B cell (primary cell): ENCODE measurements at regions of chr6 and their contacts with region 1.

Region 1: GRCh38 chr6:26156076-26156849 is 69.0 kb downstream of the HFE start:
- DNase-seq: peak; percentile 95
- ATAC-seq: peak; percentile 58
- H3K4me3 ChIP-seq: peak overlapping the region; percentile 75 to 95 (median 93)
- H3K4me3 Mint-ChIP-seq: peak overlapping the region; percentile 89
- H3K27ac ChIP-seq: peak overlapping the region; percentile 87 to 88
- H3K27ac Mint-ChIP-seq: peak overlapping the region; percentile 96
- H3K4me1 ChIP-seq: peaks cover 23 to 32% of the 10 kb centered on the region in 2 donors
- H3K4me1 Mint-ChIP-seq: peaks cover 34% of the 10 kb centered on the region
- H3K27me3 ChIP-seq: no peaks in the 10 kb centered on the region
- H3K27me3 Mint-ChIP-seq: no peaks in the 10 kb centered on the region
- CTCF ChIP-seq: no peak

Region 2: GRCh38 chr6:26025894-26026832 is 130.1 kb before region 1 on chr6:
- CTCF ChIA-PET with region 1: interaction called, 4 read pairs
- POLR2A ChIA-PET with region 1: interaction called, 43 read pairs
- intact Hi-C with region 1: loop called (anchors 2 kb)
- DNase-seq: peak; percentile 97
- ATAC-seq: peak; percentile 35
- H3K4me3 ChIP-seq: peak overlapping the region; percentile 58 to 99 (median 88)
- H3K4me3 Mint-ChIP-seq: peak overlapping the region; percentile 98
- H3K27ac ChIP-seq: peak overlapping the region; percentile 88 to 97
- H3K27ac Mint-ChIP-seq: peak overlapping the region; percentile 98
- H3K4me1 ChIP-seq: peaks cover 23 to 32% of the 10 kb centered on the region in 2 donors
- H3K4me1 Mint-ChIP-seq: peaks cover 49% of the 10 kb centered on the region
- H3K27me3 ChIP-seq: no peaks in the 10 kb centered on the region
- H3K27me3 Mint-ChIP-seq: no peaks in the 10 kb centered on the region
- CTCF ChIP-seq: peak; percentile 92

Region 3: GRCh38 chr6:26103770-26104456 is 52.4 kb before region 1 on chr6:
- CTCF ChIA-PET with region 1: interaction called, 4 read pairs
- POLR2A ChIA-PET with region 1: interaction called, 46 read pairs
- intact Hi-C with region 1: loop called (anchors 1 kb)
- DNase-seq: peak; percentile 98
- ATAC-seq: peak; percentile 87
- H3K4me3 ChIP-seq: peak overlapping the region; percentile 52 to 81 (median 62)
- H3K4me3 Mint-ChIP-seq: peak overlapping the region; percentile 88
- H3K27ac ChIP-seq: peak overlapping the region; percentile 78 to 79
- H3K27ac Mint-ChIP-seq: peak overlapping the region; percentile 99
- H3K4me1 ChIP-seq: peaks cover 5 to 15% of the 10 kb centered on the region in 2 donors
- H3K4me1 Mint-ChIP-seq: peaks cover 15% of the 10 kb centered on the region
- H3K27me3 ChIP-seq: no peaks in the 10 kb centered on the region
- H3K27me3 Mint-ChIP-seq: no peaks in the 10 kb centered on the region
- CTCF ChIP-seq: peak; percentile 66

Region 4: GRCh38 chr6:26196846-26197648 is 40.8 kb after region 1 on chr6:
- CTCF ChIA-PET with region 1: interaction called, 42 read pairs
- POLR2A ChIA-PET with region 1: interaction called, 305 read pairs
- intact Hi-C with region 1: loop called (anchors 1 kb)
- DNase-seq: peak; percentile 95
- ATAC-seq: peak; percentile 55
- H3K4me3 ChIP-seq: peak overlapping the region; percentile 78 to 100 (median 90)
- H3K4me3 Mint-ChIP-seq: peak overlapping the region; percentile 91
- H3K27ac ChIP-seq: peak overlapping the region; percentile 78 to 95
- H3K27ac Mint-ChIP-seq: peak overlapping the region; percentile 96
- H3K4me1 ChIP-seq: peaks cover 16 to 31% of the 10 kb centered on the region in 2 donors
- H3K4me1 Mint-ChIP-seq: peaks cover 41% of the 10 kb centered on the region
- H3K27me3 ChIP-seq: no peaks in the 10 kb centered on the region
- H3K27me3 Mint-ChIP-seq: no peaks in the 10 kb centered on the region
- CTCF ChIP-seq: no peak

Region 5: DNA sequence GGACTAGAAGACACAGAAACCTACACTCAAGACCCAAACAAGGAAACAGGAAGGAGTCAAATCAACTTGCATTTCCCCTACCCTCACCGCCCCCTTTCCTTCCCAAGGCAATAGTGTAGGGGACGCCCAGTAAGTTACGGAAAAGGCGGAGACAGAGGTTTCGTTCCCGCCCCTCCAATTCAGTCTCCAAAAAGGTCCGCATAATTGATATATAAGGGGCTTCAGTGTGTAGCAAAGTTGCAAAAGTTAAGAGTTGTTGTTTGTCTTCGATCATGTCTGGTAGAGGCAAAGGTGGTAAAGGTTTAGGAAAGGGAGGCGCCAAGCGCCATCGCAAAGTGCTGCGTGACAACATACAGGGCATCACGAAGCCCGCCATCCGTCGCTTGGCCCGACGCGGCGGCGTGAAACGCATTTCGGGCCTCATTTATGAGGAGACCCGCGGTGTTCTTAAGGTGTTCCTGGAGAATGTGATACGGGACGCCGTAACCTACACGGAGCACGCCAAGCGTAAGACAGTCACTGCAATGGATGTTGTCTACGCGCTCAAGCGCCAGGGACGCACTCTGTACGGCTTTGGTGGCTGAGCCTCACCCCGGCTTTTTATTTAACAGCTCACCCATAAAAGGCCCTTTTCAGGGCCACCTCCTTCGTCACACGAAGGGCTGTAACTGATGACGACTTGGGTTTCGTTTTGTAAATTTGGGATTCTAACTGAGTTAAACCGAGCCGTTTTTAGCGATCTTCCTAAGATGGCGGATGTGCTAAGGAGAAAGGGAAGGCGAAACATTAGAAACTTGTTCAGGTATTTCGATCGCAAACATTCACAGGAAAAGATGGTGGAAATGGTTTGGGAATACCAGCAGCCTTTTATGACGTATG is 84.1 kb after region 1 on chr6:
- CTCF ChIA-PET with region 1: no interaction called
- POLR2A ChIA-PET with region 1: interaction called, 63 read pairs
- intact Hi-C with region 1: no loop called
- DNase-seq: peak; percentile 91
- ATAC-seq: peak; percentile 80
- H3K4me3 ChIP-seq: peak overlapping the region; percentile 55 to 87 (median 67)
- H3K4me3 Mint-ChIP-seq: peak overlapping the region; percentile 87
- H3K27ac ChIP-seq: peak overlapping the region; percentile 76 to 93
- H3K27ac Mint-ChIP-seq: peak overlapping the region; percentile 94
- H3K4me1 ChIP-seq: peaks cover 6 to 16% of the 10 kb centered on the region in 2 donors
- H3K4me1 Mint-ChIP-seq: peaks cover 20% of the 10 kb centered on the region
- H3K27me3 ChIP-seq: no peaks in the 10 kb centered on the region
- H3K27me3 Mint-ChIP-seq: no peaks in the 10 kb centered on the region
- CTCF ChIP-seq: no peak

Region 6: DNA sequence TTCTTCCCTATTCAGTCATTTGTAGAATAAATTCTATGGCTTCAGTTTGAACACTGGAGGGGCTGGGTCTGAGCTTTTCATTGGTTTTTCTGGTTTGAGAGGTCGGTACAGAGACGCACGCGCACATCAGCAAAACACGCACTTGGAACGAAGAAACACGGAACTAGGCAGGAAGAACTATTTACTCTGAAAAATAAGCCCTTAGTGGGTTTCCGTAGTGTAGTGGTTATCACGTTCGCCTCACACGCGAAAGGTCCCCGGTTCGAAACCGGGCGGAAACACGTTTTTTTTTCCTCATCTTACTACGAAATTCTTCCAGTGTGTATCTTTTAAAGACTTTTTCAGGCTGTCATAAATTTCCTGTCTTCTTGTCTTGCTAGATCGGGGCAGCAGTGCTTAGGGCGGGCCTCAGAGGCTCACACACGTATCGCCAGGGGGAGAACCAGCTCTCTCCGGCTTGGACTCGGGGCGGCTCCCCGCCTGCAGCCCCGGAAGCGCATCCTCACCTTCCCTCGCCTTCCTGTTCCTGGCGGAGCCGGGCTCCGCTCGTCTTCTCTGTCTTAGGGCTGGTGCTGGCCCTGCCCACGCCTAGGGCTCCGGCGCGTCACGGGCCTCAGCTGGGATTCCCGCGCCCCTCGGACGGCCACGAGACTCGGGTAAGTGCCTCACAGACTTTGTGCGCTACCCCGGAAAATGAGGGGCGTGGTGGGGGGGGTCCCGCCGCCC is 381.7 kb after region 1 on chr6 and contains the start of gene HMGN4:
- CTCF ChIA-PET with region 1: no interaction called
- POLR2A ChIA-PET with region 1: interaction called, 12 read pairs
- intact Hi-C with region 1: no loop called
- DNase-seq: peak; percentile 97
- ATAC-seq: peak; percentile 68
- H3K4me3 ChIP-seq: peak within 1 kb of the TSS; percentile 89 to 98 (median 92)
- H3K4me3 Mint-ChIP-seq: peak within 1 kb of the TSS; percentile 96
- H3K27ac ChIP-seq: peak within 1 kb of the TSS; percentile 84 to 94
- H3K27ac Mint-ChIP-seq: peak within 1 kb of the TSS; percentile 99
- H3K4me1 ChIP-seq: peaks cover 29 to 35% of the 10 kb centered on the region in 2 donors
- H3K4me1 Mint-ChIP-seq: peaks cover 56% of the 10 kb centered on the region
- H3K27me3 ChIP-seq: no peaks in the 10 kb centered on the region
- H3K27me3 Mint-ChIP-seq: peaks cover 3% of the 10 kb centered on the region
- CTCF ChIP-seq: peak; percentile 8
- total RNA-seq, gene HMGN4: 81.1 and 82.4 TPM in 2 replicates

Region 7: GRCh38 chr6:27838058-27838944 is 1682.0 kb after region 1 on chr6:
- CTCF ChIA-PET with region 1: no interaction called
- POLR2A ChIA-PET with region 1: interaction called, 17 read pairs
- intact Hi-C with region 1: loop called (anchors 5 kb)
- DNase-seq: peak; percentile 98
- ATAC-seq: peak; percentile 80
- H3K4me3 ChIP-seq: peak overlapping the region; percentile 82 to 99 (median 90)
- H3K4me3 Mint-ChIP-seq: no peak overlapping the region
- H3K27ac ChIP-seq: peak overlapping the region; percentile 94 to 96
- H3K27ac Mint-ChIP-seq: no peak overlapping the region
- H3K4me1 ChIP-seq: peaks cover 28 to 29% of the 10 kb centered on the region in 2 donors
- H3K4me1 Mint-ChIP-seq: peaks cover 18% of the 10 kb centered on the region
- H3K27me3 ChIP-seq: peaks cover 0 to 4% (median 0%) of the 10 kb centered on the region in 4 experiments
- H3K27me3 Mint-ChIP-seq: no peaks in the 10 kb centered on the region
- CTCF ChIP-seq: no peak